Thyroid gland (tissue), 4 donors: ENCODE measurements at regions of chr1 and their contacts with region 1.

Region 1: GRCh38 chr1:66253330-66253921 is 280.5 kb upstream of the SGIP1 start:
- DNase-seq: no peak
- H3K4me3 ChIP-seq: no peak overlapping the region
- H3K27ac ChIP-seq: no peak overlapping the region
- H3K4me1 ChIP-seq: no peaks in the 10 kb centered on the region
- H3K27me3 ChIP-seq: no peaks in the 10 kb centered on the region
- CTCF ChIP-seq: peak; percentile 40 to 96 (median 85)
- POLR2A ChIP-seq: no peak

Region 2: GRCh38 chr1:65650682-65651081 is 602.7 kb before region 1 on chr1:
- intact Hi-C with region 1: no loop called
- DNase-seq: no peak
- H3K4me3 ChIP-seq: no peak overlapping the region
- H3K27ac ChIP-seq: no peak overlapping the region
- H3K4me1 ChIP-seq: no peaks in the 10 kb centered on the region
- H3K27me3 ChIP-seq: no peaks in the 10 kb centered on the region
- CTCF ChIP-seq: no peak
- POLR2A ChIP-seq: no peak

Region 3: DNA sequence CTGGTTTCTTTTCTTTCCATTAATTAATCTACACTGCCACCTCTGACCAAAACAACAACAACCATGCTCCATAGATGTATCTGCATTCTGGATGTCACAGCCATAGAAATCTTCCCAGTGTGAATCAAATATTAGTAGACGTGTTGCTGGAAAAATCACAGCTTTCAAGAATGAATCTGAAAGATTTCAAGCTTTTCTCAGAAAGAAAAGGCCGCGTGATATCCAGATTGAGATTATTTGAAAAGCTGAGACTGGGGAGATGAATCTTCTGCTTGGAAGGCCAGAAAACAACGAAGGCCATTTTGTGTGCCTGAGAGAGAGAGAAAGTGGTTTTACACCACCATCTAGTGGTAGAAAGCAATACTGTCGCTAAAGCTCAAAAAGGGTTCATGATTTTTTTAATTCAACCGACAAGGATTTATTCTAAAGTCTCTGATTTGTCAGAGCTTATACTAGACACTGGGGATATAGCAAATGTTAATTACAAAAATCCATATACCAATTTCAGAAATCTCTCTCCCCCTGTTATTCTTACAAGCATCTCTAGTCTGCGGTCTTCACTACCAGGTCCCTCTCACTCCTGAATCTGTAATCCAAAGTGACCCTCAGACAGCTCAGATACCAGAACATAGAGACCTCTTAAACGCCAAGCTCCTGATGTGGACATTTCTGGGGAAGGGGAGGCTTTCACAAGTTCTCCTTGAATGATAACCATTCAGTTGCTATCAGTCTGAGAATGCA is 193.0 kb after region 1 on chr1:
- intact Hi-C with region 1: loop called (anchors 2 kb)
- DNase-seq: peak in 1 of 2 donors; percentile 8
- H3K4me3 ChIP-seq: no peak overlapping the region
- H3K27ac ChIP-seq: peak overlapping the region in 2 of 3 donors; percentile 34 to 48
- H3K4me1 ChIP-seq: peaks cover 16 to 23% of the 10 kb centered on the region in 2 donors
- H3K27me3 ChIP-seq: no peaks in the 10 kb centered on the region
- CTCF ChIP-seq: peak; percentile 70 to 98 (median 84)
- POLR2A ChIP-seq: no peak

Region 4: GRCh38 chr1:66725885-66726665 is 472.6 kb after region 1 on chr1:
- intact Hi-C with region 1: loop called (anchors 10 kb)
- DNase-seq: peak; percentile 50 to 51
- H3K4me3 ChIP-seq: no peak overlapping the region
- H3K27ac ChIP-seq: peak overlapping the region in 1 of 3 donors; percentile 61
- H3K4me1 ChIP-seq: peaks cover 0 to 6% of the 10 kb centered on the region in 2 donors
- H3K27me3 ChIP-seq: no peaks in the 10 kb centered on the region
- CTCF ChIP-seq: peak; percentile 77 to 99 (median 92)
- POLR2A ChIP-seq: no peak